Caco-2 (cell line): ENCODE measurements at regions of chr7 and their contacts with region 1.

Region 1: DNA sequence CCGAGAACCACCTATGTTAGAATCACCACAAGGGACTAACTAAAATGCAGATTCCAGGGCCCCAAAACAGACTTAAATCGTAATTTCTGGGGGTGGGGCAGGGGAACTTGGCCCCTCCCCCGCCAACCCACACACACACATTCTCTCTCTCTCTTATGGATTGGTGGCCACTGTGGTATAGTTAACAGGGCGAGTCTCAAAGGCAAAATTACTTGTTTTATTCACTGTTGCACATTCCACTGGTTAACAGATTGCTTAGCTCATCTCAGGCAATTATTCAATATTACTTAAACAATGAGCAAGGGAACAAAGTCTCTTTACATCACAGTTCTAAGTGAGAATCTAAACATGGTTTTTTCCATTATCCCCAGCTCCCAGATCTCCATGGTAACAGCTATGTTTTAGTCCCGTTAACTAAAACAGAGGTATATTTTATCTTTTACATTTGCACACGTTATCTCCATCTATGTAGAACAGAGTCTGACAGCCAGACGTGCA is 38.5 kb downstream of the IGF2BP3 start:
- DNase-seq: peak in 1 of 2 experiments; percentile 36
- H3K4me3 ChIP-seq: no peak overlapping the region
- H3K4me3 Mint-ChIP-seq: peak overlapping the region; percentile 14
- H3K27ac Mint-ChIP-seq: peak overlapping the region; percentile 79
- H3K4me1 ChIP-seq: peaks cover 19% of the 10 kb centered on the region; the same call in 1 of the 2 replicates
- H3K4me1 Mint-ChIP-seq: peaks cover 36% of the 10 kb centered on the region
- H3K27me3 ChIP-seq: no peaks in the 10 kb centered on the region
- H3K27me3 Mint-ChIP-seq: no peaks in the 10 kb centered on the region
- CTCF ChIP-seq: no peak

Region 2: GRCh38 chr7:23445326-23445725 is 13.6 kb after region 1 on chr7:
- CTCF ChIA-PET with region 1: interaction called, 10 read pairs
- POLR2A ChIA-PET with region 1: no interaction called
- intact Hi-C with region 1: no loop called
- DNase-seq: no peak
- H3K4me3 ChIP-seq: no peak overlapping the region
- H3K4me3 Mint-ChIP-seq: no peak overlapping the region
- H3K27ac Mint-ChIP-seq: no peak overlapping the region
- H3K4me1 ChIP-seq: no peaks in the 10 kb centered on the region; the same call in 1 of the 2 replicates
- H3K4me1 Mint-ChIP-seq: no peaks in the 10 kb centered on the region
- H3K27me3 ChIP-seq: no peaks in the 10 kb centered on the region
- H3K27me3 Mint-ChIP-seq: no peaks in the 10 kb centered on the region
- CTCF ChIP-seq: no peak

Region 3: DNA sequence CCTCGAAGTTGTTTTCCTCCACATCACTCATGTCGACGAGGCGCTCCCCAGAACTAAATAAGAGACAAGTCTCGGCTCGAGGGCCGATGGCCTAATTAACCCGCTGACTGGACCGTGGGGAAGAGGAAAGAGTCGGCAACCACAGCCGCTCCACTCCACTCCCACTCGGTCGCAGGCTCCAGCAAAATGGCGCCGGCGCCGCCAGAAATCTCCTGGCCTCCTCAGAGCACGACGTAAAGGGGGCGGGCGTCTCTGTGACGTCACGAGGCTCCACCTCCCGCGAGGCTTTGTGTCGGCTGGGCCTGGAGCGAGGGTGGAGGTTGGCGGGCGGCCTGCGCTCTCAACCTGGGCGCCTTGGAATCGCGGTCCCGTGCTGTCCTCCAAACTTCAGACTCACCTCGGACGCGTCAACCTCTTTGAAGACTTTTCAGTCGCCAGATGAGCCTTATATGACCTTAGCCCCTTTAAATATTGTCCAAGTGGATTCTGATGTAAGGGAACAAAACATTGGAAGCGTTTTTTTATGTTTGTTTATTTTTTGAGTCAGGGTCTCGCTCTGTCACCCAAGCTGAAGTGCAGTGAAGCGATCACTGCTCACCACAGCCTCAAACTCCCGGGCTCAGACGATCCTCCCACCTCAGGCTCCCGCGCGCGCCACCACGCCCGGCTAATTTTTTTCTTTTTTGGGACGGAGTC is 100.2 kb after region 1 on chr7 and contains the start of gene TRA2A:
- CTCF ChIA-PET with region 1: no interaction called
- POLR2A ChIA-PET with region 1: no interaction called
- intact Hi-C with region 1: loop called (anchors 5 kb)
- DNase-seq: peak; percentile 97
- H3K4me3 ChIP-seq: peak within 1 kb of the TSS; percentile 99
- H3K4me3 Mint-ChIP-seq: peak within 1 kb of the TSS; percentile 91
- H3K27ac Mint-ChIP-seq: peak within 1 kb of the TSS; percentile 99
- H3K4me1 ChIP-seq: peaks cover 19% of the 10 kb centered on the region
- H3K4me1 Mint-ChIP-seq: peaks cover 16% of the 10 kb centered on the region
- H3K27me3 ChIP-seq: no peaks in the 10 kb centered on the region
- H3K27me3 Mint-ChIP-seq: no peaks in the 10 kb centered on the region
- CTCF ChIP-seq: no peak
- total RNA-seq, gene TRA2A: 123 and 132 TPM in 2 replicates

Region 4: GRCh38 chr7:23546897-23547572 is 115.3 kb after region 1 on chr7:
- CTCF ChIA-PET with region 1: interaction called, 9 read pairs
- POLR2A ChIA-PET with region 1: no interaction called
- intact Hi-C with region 1: loop called (anchors 1 kb)
- DNase-seq: peak; percentile 86 to 87
- H3K4me3 ChIP-seq: no peak overlapping the region
- H3K4me3 Mint-ChIP-seq: no peak overlapping the region
- H3K27ac Mint-ChIP-seq: no peak overlapping the region
- H3K4me1 ChIP-seq: no peaks in the 10 kb centered on the region
- H3K4me1 Mint-ChIP-seq: peaks cover 12% of the 10 kb centered on the region
- H3K27me3 ChIP-seq: no peaks in the 10 kb centered on the region
- H3K27me3 Mint-ChIP-seq: peaks cover 2% of the 10 kb centered on the region
- CTCF ChIP-seq: peak; percentile 93 to 96